ENCODE measurements at regions of chr7 and their contacts with region 1.

Region 1: GRCh38 chr7:54758702-54759592 is at the start of gene SEC61G:
- DNase-seq: peak; percentile 95
- H3K4me3 Mint-ChIP-seq: peak within 1 kb of the TSS; percentile 100
- H3K27ac Mint-ChIP-seq: peak within 1 kb of the TSS; percentile 97
- H3K4me1 Mint-ChIP-seq: peaks cover 54% of the 10 kb centered on the region
- H3K27me3 Mint-ChIP-seq: peaks cover 11% of the 10 kb centered on the region
- total RNA-seq, gene SEC61G: 160 and 168 TPM in 2 replicates

Region 2: GRCh38 chr7:54773472-54774399 is 14.8 kb after region 1 on chr7:
- intact Hi-C with region 1: loop called (anchors 1 kb)
- DNase-seq: peak; percentile 53
- H3K4me3 Mint-ChIP-seq: peak overlapping the region; percentile 70
- H3K27ac Mint-ChIP-seq: no peak overlapping the region
- H3K4me1 Mint-ChIP-seq: peaks cover 12% of the 10 kb centered on the region
- H3K27me3 Mint-ChIP-seq: peaks cover 27% of the 10 kb centered on the region

Region 3: DNA sequence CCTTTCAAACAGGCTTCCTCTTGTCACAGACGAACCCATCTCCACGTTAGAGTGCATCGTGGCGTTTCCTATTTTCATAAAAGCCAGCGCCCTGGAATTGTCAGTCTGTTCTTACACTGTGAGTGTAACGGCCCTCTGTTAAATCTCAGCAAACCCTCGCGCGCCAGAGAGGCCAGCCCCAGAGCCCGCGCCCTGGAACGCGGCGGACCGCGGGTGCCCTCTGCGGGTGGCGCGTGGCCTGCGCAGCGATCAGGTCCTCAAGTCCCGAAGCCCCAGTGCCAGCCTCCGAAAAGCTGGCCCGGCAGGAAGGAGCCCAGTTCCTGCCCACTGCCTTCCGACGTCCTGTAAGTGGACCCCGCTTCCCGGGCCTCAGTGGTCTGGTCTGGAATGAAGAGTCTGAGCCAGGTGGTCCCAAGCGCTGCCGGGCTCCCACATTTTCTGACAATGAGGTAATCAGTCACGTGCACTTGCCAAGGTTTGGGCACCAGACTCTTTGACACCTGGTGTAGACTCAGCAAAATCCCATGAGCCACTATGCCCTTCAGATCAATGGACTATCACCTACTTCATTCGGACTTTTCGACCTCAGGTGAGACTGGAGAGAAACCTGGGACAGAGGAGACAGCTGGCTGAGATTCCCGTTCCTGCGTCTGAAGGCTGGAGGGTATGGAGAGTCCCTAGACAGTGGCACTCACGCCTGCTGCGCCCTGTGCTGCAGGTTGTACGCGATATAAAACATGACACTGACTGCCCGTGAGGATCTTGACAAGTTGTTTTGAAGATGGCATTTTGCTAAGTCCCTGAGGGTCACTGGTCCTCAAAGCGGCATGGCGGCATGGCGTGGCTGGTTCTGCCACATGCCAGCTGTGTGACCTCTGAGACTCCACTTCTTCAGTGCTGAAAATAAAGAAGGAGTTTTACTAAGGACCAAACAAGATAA is 496.8 kb after region 1 on chr7:
- intact Hi-C with region 1: loop called (anchors 1 kb)
- DNase-seq: peak; percentile 57
- H3K4me3 Mint-ChIP-seq: peak overlapping the region; percentile 85
- H3K27ac Mint-ChIP-seq: peak overlapping the region; percentile 53
- H3K4me1 Mint-ChIP-seq: peaks cover 12% of the 10 kb centered on the region
- H3K27me3 Mint-ChIP-seq: peaks cover 51% of the 10 kb centered on the region

Region 4: GRCh38 chr7:55534175-55534915 is 775.4 kb after region 1 on chr7:
- intact Hi-C with region 1: loop called (anchors 1 kb)
- DNase-seq: peak; percentile 84
- H3K4me3 Mint-ChIP-seq: peak overlapping the region; percentile 75
- H3K27ac Mint-ChIP-seq: peak overlapping the region; percentile 98
- H3K4me1 Mint-ChIP-seq: peaks cover 95% of the 10 kb centered on the region
- H3K27me3 Mint-ChIP-seq: no peaks in the 10 kb centered on the region

Region 5: DNA sequence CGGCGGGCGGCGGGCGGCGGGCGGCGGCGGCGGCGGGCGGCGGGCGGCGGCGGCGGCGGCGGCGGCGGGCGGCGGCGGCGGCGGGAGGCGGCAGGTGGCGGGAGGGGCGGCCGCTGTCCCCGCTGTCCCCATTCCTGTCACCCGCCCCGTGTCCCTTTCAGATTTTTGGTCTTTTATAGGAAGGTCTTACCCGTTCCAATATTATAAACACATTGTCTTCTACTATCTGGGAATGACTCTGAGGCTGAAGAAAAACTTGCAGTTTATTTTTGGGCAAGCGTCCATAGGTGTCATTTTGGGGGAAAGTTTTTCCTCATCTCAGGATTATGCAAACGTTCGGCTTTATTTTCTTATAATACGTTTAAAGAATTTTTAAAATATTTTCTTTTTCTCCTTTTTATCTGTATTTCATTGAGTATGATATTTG is 1128.9 kb after region 1 on chr7:
- intact Hi-C with region 1: loop called (anchors 5 kb)
- DNase-seq: no peak
- H3K4me3 Mint-ChIP-seq: peak overlapping the region; percentile 87
- H3K27ac Mint-ChIP-seq: peak overlapping the region; percentile 84
- H3K4me1 Mint-ChIP-seq: peaks cover 5% of the 10 kb centered on the region
- H3K27me3 Mint-ChIP-seq: peaks cover 2% of the 10 kb centered on the region

Region 6: DNA sequence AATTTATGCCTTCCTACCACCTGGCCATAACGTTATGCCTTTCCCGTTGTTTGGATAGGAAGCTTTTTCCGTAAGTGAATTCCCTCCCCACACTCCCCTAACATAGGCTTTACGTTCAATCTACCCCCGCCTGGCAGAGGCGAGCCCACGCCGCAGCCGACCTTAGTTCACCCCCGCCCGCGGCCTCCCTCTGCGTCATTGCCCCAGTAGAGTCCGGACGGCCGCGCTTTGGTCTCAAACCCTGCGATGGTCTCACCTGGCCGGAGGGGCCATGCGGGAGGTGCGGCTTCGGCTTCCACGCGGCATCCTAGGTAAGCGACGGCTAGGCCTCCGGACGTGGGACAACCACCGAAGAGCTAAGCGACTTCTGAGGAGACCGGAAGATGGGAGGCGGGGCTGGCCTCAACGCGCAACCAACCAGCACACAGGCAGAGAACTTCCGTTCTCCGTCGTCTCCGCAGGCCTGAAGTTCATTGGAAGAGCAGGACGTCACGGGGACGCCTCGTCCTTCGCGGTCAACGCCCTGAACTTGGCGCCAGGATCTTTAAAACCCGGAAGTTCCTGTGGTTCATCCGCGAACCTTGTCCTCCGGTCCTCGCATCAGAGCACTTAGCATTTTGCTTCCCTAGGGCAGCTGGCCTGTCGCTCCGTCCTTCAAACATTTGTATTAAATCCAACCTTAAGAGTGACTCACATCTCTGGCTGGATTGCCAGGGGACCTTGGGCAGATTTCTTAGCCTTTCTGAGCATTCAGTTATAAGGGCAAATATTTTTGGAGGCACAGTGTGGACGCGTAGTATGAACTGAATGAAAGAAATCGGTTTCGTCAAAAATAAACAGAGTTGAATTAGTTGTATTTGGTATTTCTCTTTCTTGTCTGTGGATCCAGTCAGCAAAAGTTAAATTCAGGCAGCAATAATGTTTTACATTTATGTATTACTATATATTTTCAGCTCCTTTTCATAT is 1347.4 kb after region 1 on chr7 and contains the start of gene CHCHD2:
- intact Hi-C with region 1: loop called (anchors 1 kb)
- DNase-seq: peak; percentile 92
- H3K4me3 Mint-ChIP-seq: peak within 1 kb of the TSS; percentile 95
- H3K27ac Mint-ChIP-seq: peak within 1 kb of the TSS; percentile 94
- H3K4me1 Mint-ChIP-seq: peaks cover 21% of the 10 kb centered on the region
- H3K27me3 Mint-ChIP-seq: no peaks in the 10 kb centered on the region
- total RNA-seq, gene CHCHD2: 613 and 617 TPM in 2 replicates

Measured in activated T-helper 1 cell treated with anti-CD3 and anti-CD28 coated beads, Interleukin-12 subunit alpha, Interleukin-12 subunit beta, Interleukin-2, Interleukin-4 antibody, amounts not matched to agents 30 ng/mL and 10 ng/mL and 1 ng/mL, durations not matched to agents 14 hours and 24 hours and 36 hours (primary cell).